Activated CD4-positive, alpha-beta T cell treated with anti-CD3 and anti-CD28 coated beads for 36 hours (primary cell): ENCODE measurements at regions of chrX and their contacts with region 1.

Region 1: GRCh38 chrX:65750674-65751469 is 83.4 kb downstream of the MSN start:
- DNase-seq: peak; percentile 47
- ATAC-seq: peak; percentile 82
- H3K4me3 Mint-ChIP-seq: no peak overlapping the region
- H3K27ac Mint-ChIP-seq: peak overlapping the region; percentile 31
- H3K4me1 Mint-ChIP-seq: peaks cover 55% of the 10 kb centered on the region
- H3K27me3 Mint-ChIP-seq: no peaks in the 10 kb centered on the region

Region 2: DNA sequence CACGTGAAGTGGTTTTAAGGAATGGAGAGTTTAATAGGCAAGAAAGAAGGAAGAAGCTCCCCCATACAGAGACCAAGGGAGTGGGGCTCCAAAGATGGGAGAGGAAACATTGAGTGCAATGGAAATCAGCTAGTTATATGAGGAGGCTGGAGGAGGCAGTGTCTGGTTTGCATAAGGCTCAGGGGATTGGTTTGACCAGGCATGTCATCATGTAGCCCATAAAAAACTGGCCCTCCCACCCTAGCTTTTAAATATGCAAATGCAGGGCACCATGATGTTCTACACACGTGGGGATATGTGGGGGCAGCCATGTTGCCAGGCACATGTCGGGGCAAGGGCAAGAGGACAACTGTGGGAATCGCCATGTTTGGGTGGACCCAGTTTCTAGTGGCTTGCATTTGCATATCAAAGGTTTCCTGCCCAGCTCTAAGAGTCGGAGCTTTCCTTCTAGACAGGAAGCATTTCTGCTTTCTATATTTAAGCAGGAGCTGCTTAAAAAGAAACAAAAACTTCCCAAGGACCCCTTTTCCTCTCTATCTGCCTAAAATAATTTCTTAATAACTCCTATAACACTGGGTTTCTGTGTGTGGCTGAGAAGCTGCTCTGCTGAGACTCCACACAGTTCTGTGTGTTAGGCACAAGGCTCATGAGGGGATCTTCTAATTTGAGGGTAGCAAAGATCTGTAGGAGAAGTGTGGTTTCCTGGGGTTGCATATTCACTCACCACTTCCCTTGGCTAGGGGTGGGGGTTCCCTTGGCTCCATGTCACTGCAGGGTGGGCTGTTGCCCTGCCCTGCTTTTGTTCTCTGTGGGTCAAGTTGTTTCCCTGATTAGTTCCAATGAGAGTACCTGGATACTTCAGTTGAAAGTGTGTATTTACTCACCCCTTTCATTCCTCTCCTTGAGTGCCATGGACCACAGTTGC is 175.5 kb after region 1 on chrX:
- CTCF ChIA-PET with region 1: no interaction called
- POLR2A ChIA-PET with region 1: no interaction called
- intact Hi-C with region 1: loop called in 1 of 2 experiments (anchors 10 kb)
- DNase-seq: peak; percentile 45
- ATAC-seq: peak; percentile 65
- H3K4me3 Mint-ChIP-seq: no peak overlapping the region
- H3K27ac Mint-ChIP-seq: peak overlapping the region; percentile 76
- H3K4me1 Mint-ChIP-seq: peaks cover 48% of the 10 kb centered on the region
- H3K27me3 Mint-ChIP-seq: no peaks in the 10 kb centered on the region